Endothelial cell of umbilical vein (primary cell): ENCODE measurements at regions of chr9 and their contacts with region 1.

Region 1: GRCh38 chr9:77903666-77904285 is 127.8 kb downstream of the GNAQ start:
- DNase-seq: no peak
- H3K4me3 ChIP-seq: no peak overlapping the region
- H3K27ac ChIP-seq: no peak overlapping the region
- H3K4me1 ChIP-seq: peaks cover 18% of the 10 kb centered on the region
- H3K27me3 ChIP-seq: no peaks in the 10 kb centered on the region
- CTCF ChIP-seq: no peak
- POLR2A ChIP-seq: no peak

Region 2: GRCh38 chr9:77916410-77916819 is 12.6 kb after region 1 on chr9:
- CTCF ChIA-PET with region 1: no interaction called
- POLR2A ChIA-PET with region 1: no interaction called
- dilution Hi-C with region 1: no loop called
- intact Hi-C with region 1: loop called (anchors 1 kb)
- DNase-seq: peak; percentile 67
- H3K4me3 ChIP-seq: no peak overlapping the region
- H3K27ac ChIP-seq: no peak overlapping the region
- H3K4me1 ChIP-seq: peaks cover 6% of the 10 kb centered on the region
- H3K27me3 ChIP-seq: no peaks in the 10 kb centered on the region
- CTCF ChIP-seq: no peak
- POLR2A ChIP-seq: no peak